ENCODE measurements at regions of chr2 and their contacts with region 1.

Region 1: GRCh38 chr2:170715062-170715931 is at the start of gene SP5:
- DNase-seq: peak; percentile 40
- H3K4me3 Mint-ChIP-seq: peak within 1 kb of the TSS; percentile 76
- H3K27ac Mint-ChIP-seq: no peak within 1 kb of the TSS
- H3K4me1 Mint-ChIP-seq: peaks cover 26% of the 10 kb centered on the region
- H3K27me3 Mint-ChIP-seq: peaks cover 68% of the 10 kb centered on the region
- total RNA-seq, gene SP5: 0.30 and 0.32 TPM in 2 replicates

Region 2: GRCh38 chr2:170324640-170325046 is 390.7 kb before region 1 on chr2:
- intact Hi-C with region 1: loop called (anchors 5 kb)
- DNase-seq: peak; percentile 38
- H3K4me3 Mint-ChIP-seq: no peak overlapping the region
- H3K27ac Mint-ChIP-seq: no peak overlapping the region
- H3K4me1 Mint-ChIP-seq: peaks cover 3% of the 10 kb centered on the region
- H3K27me3 Mint-ChIP-seq: no peaks in the 10 kb centered on the region

Region 3: GRCh38 chr2:170409164-170409535 is 306.1 kb before region 1 on chr2:
- intact Hi-C with region 1: loop called (anchors 5 kb)
- DNase-seq: peak; percentile 60
- H3K4me3 Mint-ChIP-seq: peak overlapping the region; percentile 35
- H3K27ac Mint-ChIP-seq: peak overlapping the region; percentile 55
- H3K4me1 Mint-ChIP-seq: peaks cover 17% of the 10 kb centered on the region
- H3K27me3 Mint-ChIP-seq: peaks cover 4% of the 10 kb centered on the region

Region 4: DNA sequence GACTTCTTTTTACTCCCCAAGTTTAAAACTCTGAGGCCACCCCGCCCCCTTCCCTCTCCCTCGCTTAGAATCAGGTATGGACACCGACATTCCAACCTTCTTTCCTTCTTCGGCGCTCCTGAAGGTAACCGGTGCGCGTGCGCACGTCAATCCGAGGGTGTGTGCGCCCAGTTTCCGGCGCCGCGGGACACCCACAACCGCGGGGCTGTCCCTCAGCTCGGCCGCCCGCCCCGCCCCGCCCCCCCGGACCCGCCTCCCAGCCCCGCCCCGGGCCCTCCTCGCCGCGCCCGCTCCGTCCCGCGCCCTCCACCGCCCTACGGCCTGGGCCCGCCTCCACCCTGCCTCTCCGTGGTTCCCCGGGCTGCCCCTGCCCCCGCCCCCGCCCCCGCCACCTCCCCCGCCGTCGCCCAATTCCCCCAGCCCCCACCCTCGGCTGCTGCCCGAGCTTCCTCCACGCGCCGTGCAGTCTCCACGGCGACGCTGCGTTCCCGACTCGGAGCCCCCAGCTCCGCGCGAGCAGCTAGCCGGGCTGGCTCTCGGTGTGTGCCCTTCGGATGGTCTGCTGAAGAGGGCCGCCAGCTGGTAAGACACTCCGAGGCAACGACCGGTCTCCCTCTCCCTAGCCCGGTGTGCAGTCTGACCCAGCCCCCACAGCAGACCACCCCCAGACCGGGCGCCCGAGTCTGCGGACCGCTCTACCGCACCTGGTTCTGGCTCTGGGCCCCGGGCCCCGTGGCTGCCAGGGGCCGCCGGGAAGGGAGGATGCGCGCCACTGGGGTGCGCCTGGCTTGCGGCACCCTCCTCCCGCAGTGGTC is 55.5 kb after region 1 on chr2:
- intact Hi-C with region 1: loop called (anchors 2 kb)
- DNase-seq: peak; percentile 68
- H3K4me3 Mint-ChIP-seq: peak overlapping the region; percentile 94
- H3K27ac Mint-ChIP-seq: peak overlapping the region; percentile 85
- H3K4me1 Mint-ChIP-seq: peaks cover 10% of the 10 kb centered on the region
- H3K27me3 Mint-ChIP-seq: peaks cover 36% of the 10 kb centered on the region

Region 5: GRCh38 chr2:170822290-170823087 is 107.2 kb after region 1 on chr2:
- intact Hi-C with region 1: no loop called
- DNase-seq: no peak
- H3K4me3 Mint-ChIP-seq: peak overlapping the region; percentile 41
- H3K27ac Mint-ChIP-seq: no peak overlapping the region
- H3K4me1 Mint-ChIP-seq: peaks cover 35% of the 10 kb centered on the region
- H3K27me3 Mint-ChIP-seq: peaks cover 54% of the 10 kb centered on the region